GM12878 (cell line): ENCODE measurements at regions of chr19 and their contacts with region 1.

Region 1: GRCh38 chr19:48993175-48994034 is at the starts of genes GYS1 and RUVBL2:
- DNase-seq: peak; percentile 98
- ATAC-seq: peak; percentile 96
- H3K4me3 ChIP-seq: peak within 1 kb of the TSS; percentile 93
- H3K27ac ChIP-seq: peak within 1 kb of the TSS; percentile 86
- H3K4me1 ChIP-seq: peaks cover 3% of the 10 kb centered on the region
- H3K27me3 ChIP-seq: no peaks in the 10 kb centered on the region
- CTCF ChIP-seq: peak; percentile 98; a peak in 5 of 6 replicates
- EP300 ChIP-seq: no peak
- POLR2A ChIP-seq: peak; percentile 90
- RAD21 ChIP-seq: 0 out of 2 replicates have a peak, but pooled peaks have one; percentile 32
- polyA plus RNA-seq, gene GYS1: 3.7 to 5.8 TPM
- polyA plus RNA-seq, gene RUVBL2: 33.8 to 70.6 TPM

Region 2: GRCh38 chr19:48819366-48819816 is 174.0 kb before region 1 on chr19:
- CTCF ChIA-PET with region 1: no interaction called
- POLR2A ChIA-PET with region 1: no interaction called
- RAD21 ChIA-PET with region 1: no interaction called
- SMC1A ChIA-PET with region 1: no interaction called
- in situ Hi-C with region 1: no loop called
- intact Hi-C with region 1: no loop called
- DNase-seq: no peak
- ATAC-seq: no peak
- H3K4me3 ChIP-seq: no peak overlapping the region
- H3K27ac ChIP-seq: no peak overlapping the region
- H3K4me1 ChIP-seq: peaks cover 12% of the 10 kb centered on the region; the same call in 1 of the 2 replicates
- H3K27me3 ChIP-seq: no peaks in the 10 kb centered on the region
- CTCF ChIP-seq: no peak
- EP300 ChIP-seq: no peak
- POLR2A ChIP-seq: no peak
- RAD21 ChIP-seq: no peak

Region 3: DNA sequence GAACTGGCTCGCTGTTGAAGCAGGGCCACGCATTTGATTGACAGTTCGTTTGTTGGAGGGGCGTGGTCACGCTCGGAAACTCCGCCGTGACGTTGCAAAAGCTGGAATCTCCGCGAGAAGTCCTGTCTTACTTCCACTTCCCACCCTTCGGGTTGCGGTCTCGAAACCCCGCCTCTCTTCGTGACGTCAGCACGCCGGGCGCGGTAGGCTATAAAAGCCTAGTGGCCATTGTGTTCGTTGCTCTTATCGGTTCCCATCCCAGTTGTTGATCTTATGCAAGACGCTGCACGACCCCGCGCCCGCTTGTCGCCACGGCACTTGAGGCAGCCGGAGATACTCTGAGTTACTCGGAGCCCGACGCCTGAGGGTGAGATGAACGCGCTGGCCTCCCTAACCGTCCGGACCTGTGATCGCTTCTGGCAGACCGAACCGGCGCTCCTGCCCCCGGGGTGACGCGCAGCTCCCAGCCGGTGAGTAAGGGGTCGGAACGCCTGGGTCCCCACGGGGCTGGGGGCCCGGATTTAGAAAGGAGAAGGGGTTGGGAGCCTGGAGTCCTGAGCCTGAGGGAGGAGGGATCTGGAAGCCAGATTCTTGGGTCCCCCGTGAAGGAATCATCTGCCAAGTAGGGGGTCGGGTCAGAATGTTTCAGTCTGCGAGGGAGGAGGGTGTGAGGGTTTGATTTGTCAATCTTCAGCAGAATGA is 121.1 kb before region 1 on chr19 and contains the start of gene PPP1R15A:
- CTCF ChIA-PET with region 1: interaction called, 22 read pairs
- POLR2A ChIA-PET with region 1: interaction called, 13 read pairs
- RAD21 ChIA-PET with region 1: interaction called, 11 read pairs
- SMC1A ChIA-PET with region 1: interaction called, 4 read pairs
- in situ Hi-C with region 1: no loop called
- intact Hi-C with region 1: no loop called
- DNase-seq: peak; percentile 97
- ATAC-seq: peak; percentile 39
- H3K4me3 ChIP-seq: peak within 1 kb of the TSS; percentile 100
- H3K27ac ChIP-seq: peak within 1 kb of the TSS; percentile 94
- H3K4me1 ChIP-seq: peaks cover 20% of the 10 kb centered on the region
- H3K27me3 ChIP-seq: no peaks in the 10 kb centered on the region
- CTCF ChIP-seq: no peak; a peak in 1 of 6 replicates
- EP300 ChIP-seq: peak in 1 of 2 experiments; percentile 41; a peak in 1 of 4 replicates
- POLR2A ChIP-seq: peak; percentile 100
- RAD21 ChIP-seq: no peak
- polyA plus RNA-seq, gene PPP1R15A: 0.68 to 0.90 TPM

Region 4: DNA sequence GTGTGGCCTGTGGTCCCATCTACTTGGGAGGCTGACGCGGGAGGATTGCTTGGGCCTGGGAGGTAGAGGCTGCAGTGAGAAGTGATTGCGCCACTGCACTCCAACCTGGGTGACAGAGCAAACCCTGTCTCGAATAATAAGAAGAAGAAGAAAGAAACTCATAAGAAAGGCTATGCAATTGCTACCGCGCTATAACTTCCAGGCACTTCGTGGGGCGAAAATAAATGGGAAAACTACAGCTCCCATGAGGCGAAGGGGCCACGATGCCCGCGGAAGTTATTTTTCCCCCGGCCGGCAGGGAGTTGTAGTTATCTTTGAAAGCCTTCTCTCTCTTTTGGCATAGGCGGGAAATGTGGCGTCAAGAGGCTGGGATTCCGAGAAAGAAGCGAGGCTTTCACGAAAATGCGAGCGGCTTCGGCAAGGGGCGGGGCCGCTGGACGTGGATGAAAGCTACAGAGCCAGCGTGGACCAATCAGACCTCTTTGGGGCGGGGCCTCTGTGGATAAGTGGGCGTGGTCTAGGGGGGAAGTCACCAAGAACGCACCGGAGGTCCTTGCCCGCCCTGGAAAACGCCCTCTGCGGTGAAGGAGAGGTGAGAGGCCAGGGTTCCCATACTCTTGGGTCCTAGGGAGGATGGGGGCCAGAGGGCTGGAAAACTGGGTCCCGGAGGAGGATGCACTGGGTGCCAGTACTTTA is 93.5 kb before region 1 on chr19 and contains the start of gene NUCB1:
- CTCF ChIA-PET with region 1: interaction called, 11 read pairs
- POLR2A ChIA-PET with region 1: interaction called, 7 read pairs
- RAD21 ChIA-PET with region 1: interaction called, 8 read pairs
- SMC1A ChIA-PET with region 1: no interaction called
- in situ Hi-C with region 1: no loop called
- intact Hi-C with region 1: no loop called
- DNase-seq: peak; percentile 89
- ATAC-seq: peak; percentile 95
- H3K4me3 ChIP-seq: peak within 1 kb of the TSS; percentile 99
- H3K27ac ChIP-seq: peak within 1 kb of the TSS; percentile 47
- H3K4me1 ChIP-seq: no peaks in the 10 kb centered on the region; the same call in 1 of the 2 replicates
- H3K27me3 ChIP-seq: no peaks in the 10 kb centered on the region
- CTCF ChIP-seq: 0 out of 6 replicates have a peak, but pooled peaks of 1 of the 3 experiments have one; percentile 13
- EP300 ChIP-seq: no peak
- POLR2A ChIP-seq: peak; percentile 69
- RAD21 ChIP-seq: no peak
- polyA plus RNA-seq, gene NUCB1: 1.8 to 3.2 TPM

Region 5: DNA sequence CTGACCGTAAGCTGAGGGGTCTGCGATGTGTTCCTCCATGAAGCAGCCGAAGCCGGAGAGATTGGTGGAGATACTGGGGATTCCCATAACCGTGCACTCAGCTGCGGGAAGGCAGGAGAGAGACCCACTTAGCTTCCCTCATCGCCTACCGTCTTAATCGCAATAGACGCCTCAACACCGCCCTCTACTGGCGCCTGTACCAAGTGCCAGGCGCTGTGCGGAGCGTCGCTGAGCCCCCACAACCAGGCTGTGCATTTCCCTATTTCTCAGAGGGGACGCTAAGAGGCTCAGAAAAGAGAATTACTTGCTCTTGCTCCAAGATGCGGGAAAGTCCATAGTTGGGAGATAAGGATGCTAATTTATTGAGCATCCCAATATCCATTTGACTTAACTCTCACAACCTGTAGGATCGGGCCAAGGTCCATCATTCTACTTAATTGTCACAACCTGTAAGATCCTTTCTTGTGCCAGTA is 22.4 kb before region 1 on chr19:
- CTCF ChIA-PET with region 1: interaction called, 36 read pairs
- POLR2A ChIA-PET with region 1: interaction called, 41 read pairs
- RAD21 ChIA-PET with region 1: interaction called, 7 read pairs
- SMC1A ChIA-PET with region 1: interaction called, 11 read pairs
- in situ Hi-C with region 1: no loop called
- intact Hi-C with region 1: no loop called
- DNase-seq: no peak
- ATAC-seq: peak; percentile 85
- H3K4me3 ChIP-seq: no peak overlapping the region
- H3K27ac ChIP-seq: 0 out of 2 replicates have a peak overlapping the region, but pooled peaks have one; percentile 13
- H3K4me1 ChIP-seq: peaks cover 17% of the 10 kb centered on the region
- H3K27me3 ChIP-seq: no peaks in the 10 kb centered on the region
- CTCF ChIP-seq: peak; percentile 92 to 97 (median 94)
- EP300 ChIP-seq: no peak
- POLR2A ChIP-seq: no peak
- RAD21 ChIP-seq: peak; percentile 86

Region 6: GRCh38 chr19:48975947-48976847 is 17.2 kb before region 1 on chr19:
- CTCF ChIA-PET with region 1: interaction called, 55 read pairs
- POLR2A ChIA-PET with region 1: interaction called, 41 read pairs
- RAD21 ChIA-PET with region 1: interaction called, 17 read pairs
- SMC1A ChIA-PET with region 1: interaction called, 11 read pairs
- in situ Hi-C with region 1: no loop called
- intact Hi-C with region 1: no loop called
- DNase-seq: no peak
- ATAC-seq: peak; percentile 69
- H3K4me3 ChIP-seq: no peak overlapping the region
- H3K27ac ChIP-seq: no peak overlapping the region
- H3K4me1 ChIP-seq: peaks cover 4% of the 10 kb centered on the region
- H3K27me3 ChIP-seq: no peaks in the 10 kb centered on the region
- CTCF ChIP-seq: no peak
- EP300 ChIP-seq: no peak
- POLR2A ChIP-seq: no peak
- RAD21 ChIP-seq: no peak

Region 7: DNA sequence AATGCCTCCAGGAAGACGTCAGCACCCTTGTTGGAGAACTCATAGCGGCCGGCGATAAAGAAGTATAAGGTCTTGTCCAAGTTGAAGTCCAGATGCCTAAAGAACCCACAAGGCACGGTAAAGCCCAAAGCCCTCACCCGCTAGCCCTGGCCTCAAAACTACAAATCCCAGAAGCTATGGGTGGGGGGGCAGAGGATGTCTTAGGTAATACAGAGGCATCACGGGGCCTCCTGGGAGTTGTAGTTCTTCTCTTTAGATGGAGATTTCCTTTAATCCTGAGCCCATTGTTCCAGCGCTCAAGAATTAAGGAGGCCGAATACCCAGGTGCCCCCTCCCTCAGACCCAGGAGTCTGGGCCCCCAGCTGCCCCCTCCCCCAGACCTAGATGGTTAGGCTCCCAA is 11.1 kb before region 1 on chr19:
- CTCF ChIA-PET with region 1: interaction called, 55 read pairs
- POLR2A ChIA-PET with region 1: interaction called, 41 read pairs
- RAD21 ChIA-PET with region 1: interaction called, 17 read pairs
- SMC1A ChIA-PET with region 1: interaction called, 10 read pairs
- in situ Hi-C with region 1: no loop called
- intact Hi-C with region 1: no loop called
- DNase-seq: no peak
- ATAC-seq: no peak
- H3K4me3 ChIP-seq: no peak overlapping the region
- H3K27ac ChIP-seq: no peak overlapping the region
- H3K4me1 ChIP-seq: peaks cover 4% of the 10 kb centered on the region
- H3K27me3 ChIP-seq: no peaks in the 10 kb centered on the region
- CTCF ChIP-seq: no peak
- EP300 ChIP-seq: no peak
- POLR2A ChIP-seq: no peak
- RAD21 ChIP-seq: no peak

Region 8: GRCh38 chr19:49210108-49210900 is 216.9 kb after region 1 on chr19:
- CTCF ChIA-PET with region 1: interaction called, 10 read pairs
- POLR2A ChIA-PET with region 1: interaction called, 4 read pairs
- RAD21 ChIA-PET with region 1: interaction called, 6 read pairs
- SMC1A ChIA-PET with region 1: interaction called, 4 read pairs
- in situ Hi-C with region 1: no loop called
- intact Hi-C with region 1: no loop called
- DNase-seq: no peak
- ATAC-seq: peak; percentile 48; the same call in 2 of the 3 replicates
- H3K4me3 ChIP-seq: no peak overlapping the region
- H3K27ac ChIP-seq: no peak overlapping the region
- H3K4me1 ChIP-seq: peaks cover 7% of the 10 kb centered on the region
- H3K27me3 ChIP-seq: peaks cover 0 to 2% of the 10 kb centered on the region in 2 experiments; a peak in 1 of 4 replicates
- CTCF ChIP-seq: no peak
- EP300 ChIP-seq: no peak
- POLR2A ChIP-seq: no peak
- RAD21 ChIP-seq: no peak